Calu3 (cell line): ENCODE measurements at regions of chr11 and their contacts with region 1.

Region 1: GRCh38 chr11:32052218-32052617 is 38.7 kb upstream of the RCN1 start:
- DNase-seq: peak; percentile 64
- H3K4me3 Mint-ChIP-seq: no peak overlapping the region
- H3K27ac Mint-ChIP-seq: no peak overlapping the region
- H3K4me1 Mint-ChIP-seq: no peaks in the 10 kb centered on the region
- H3K27me3 Mint-ChIP-seq: peaks cover 92% of the 10 kb centered on the region
- CTCF ChIP-seq: peak; percentile 55

Region 2: DNA sequence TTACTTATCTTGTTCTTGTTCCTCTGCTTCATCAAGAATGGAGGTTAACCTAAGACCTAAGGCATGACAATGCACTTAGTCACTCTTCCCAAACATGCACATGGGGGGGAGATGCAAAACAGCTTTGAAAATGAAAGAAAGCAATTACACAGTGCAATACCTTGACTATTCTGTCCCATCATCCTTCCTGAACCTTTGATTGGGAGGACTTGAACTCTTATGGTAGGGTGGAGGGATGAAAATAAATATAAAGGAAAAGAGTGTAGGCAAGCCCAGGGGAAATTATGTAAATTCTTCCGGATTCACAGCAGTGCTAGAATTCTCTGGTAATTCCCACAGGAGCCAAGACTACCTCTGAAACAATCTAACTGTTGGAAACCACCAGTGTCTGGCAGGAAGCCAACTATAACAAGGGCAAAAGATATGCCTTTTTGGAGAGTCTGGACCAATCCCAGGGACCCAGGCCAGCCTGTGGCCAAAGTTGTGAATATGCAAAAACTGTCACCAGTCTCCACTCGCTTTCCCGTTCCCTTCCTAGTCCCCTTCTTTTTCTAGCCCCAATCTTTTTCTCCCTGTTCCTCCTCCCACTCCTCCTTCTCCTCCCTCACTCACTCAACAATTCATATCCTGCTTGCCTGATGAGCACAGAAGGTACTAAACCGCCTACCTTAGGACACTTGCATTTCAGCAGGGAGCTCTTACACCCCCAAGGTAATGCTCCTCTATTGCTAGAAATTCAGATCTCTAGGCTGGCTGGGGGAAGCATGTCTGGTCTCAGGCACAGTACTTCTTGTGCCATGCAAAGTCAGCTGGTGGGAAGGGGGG is 36.1 kb after region 1 on chr11:
- CTCF ChIA-PET with region 1: no interaction called
- intact Hi-C with region 1: loop called (anchors 1 kb)
- DNase-seq: peak; percentile 61
- H3K4me3 Mint-ChIP-seq: peak overlapping the region; percentile 12
- H3K27ac Mint-ChIP-seq: peak overlapping the region; percentile 13
- H3K4me1 Mint-ChIP-seq: peaks cover 36% of the 10 kb centered on the region
- H3K27me3 Mint-ChIP-seq: no peaks in the 10 kb centered on the region
- CTCF ChIP-seq: no peak

Region 3: DNA sequence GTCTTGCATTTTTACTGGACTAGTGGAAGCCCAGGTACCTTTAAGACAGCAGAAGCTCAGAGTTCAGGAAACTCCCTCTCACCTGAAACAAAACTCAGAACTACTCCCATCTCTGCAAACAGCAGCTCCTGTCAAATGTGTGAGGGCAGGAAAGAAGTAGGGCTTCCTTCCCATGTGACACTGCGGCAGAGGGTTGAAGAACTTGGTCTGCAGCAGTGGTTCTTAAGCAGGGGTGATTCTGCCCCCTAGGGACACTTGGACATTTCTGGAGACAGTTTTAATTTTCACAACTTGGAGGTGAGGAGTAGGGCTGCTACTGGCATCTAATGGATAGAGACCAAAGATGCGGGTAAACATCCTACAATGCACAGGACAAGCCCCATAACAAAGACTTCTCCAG is 102.1 kb after region 1 on chr11:
- CTCF ChIA-PET with region 1: no interaction called
- intact Hi-C with region 1: loop called (anchors 1 kb)
- DNase-seq: peak; percentile 35
- H3K4me3 Mint-ChIP-seq: no peak overlapping the region
- H3K27ac Mint-ChIP-seq: no peak overlapping the region
- H3K4me1 Mint-ChIP-seq: no peaks in the 10 kb centered on the region
- H3K27me3 Mint-ChIP-seq: peaks cover 98% of the 10 kb centered on the region
- CTCF ChIP-seq: no peak

Region 4: DNA sequence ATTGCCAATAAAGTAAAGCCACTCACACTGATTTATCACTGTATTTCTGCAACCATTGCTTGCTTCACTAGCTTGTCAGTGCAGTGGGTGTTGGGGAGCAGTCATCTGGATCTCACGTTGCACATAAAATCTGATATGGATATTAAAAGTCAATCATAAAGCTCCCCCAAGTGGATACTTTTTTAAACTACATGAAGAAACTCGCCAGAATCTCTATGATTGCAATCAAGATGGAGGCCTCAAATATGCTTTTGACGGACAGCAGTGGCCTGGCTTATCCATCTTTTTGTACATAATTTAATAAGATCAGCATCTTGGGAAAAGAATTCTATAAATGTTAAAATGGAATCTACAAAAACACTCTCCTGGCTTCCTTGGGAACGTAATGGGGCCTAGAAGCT is 245.4 kb after region 1 on chr11:
- CTCF ChIA-PET with region 1: no interaction called
- intact Hi-C with region 1: loop called (anchors 5 kb)
- DNase-seq: peak; percentile 2
- H3K4me3 Mint-ChIP-seq: no peak overlapping the region
- H3K27ac Mint-ChIP-seq: no peak overlapping the region
- H3K4me1 Mint-ChIP-seq: no peaks in the 10 kb centered on the region
- H3K27me3 Mint-ChIP-seq: peaks cover 63% of the 10 kb centered on the region
- CTCF ChIP-seq: peak; percentile 27